ENCODE measurements at regions of chr17 and their contacts with region 1.

Region 1: DNA sequence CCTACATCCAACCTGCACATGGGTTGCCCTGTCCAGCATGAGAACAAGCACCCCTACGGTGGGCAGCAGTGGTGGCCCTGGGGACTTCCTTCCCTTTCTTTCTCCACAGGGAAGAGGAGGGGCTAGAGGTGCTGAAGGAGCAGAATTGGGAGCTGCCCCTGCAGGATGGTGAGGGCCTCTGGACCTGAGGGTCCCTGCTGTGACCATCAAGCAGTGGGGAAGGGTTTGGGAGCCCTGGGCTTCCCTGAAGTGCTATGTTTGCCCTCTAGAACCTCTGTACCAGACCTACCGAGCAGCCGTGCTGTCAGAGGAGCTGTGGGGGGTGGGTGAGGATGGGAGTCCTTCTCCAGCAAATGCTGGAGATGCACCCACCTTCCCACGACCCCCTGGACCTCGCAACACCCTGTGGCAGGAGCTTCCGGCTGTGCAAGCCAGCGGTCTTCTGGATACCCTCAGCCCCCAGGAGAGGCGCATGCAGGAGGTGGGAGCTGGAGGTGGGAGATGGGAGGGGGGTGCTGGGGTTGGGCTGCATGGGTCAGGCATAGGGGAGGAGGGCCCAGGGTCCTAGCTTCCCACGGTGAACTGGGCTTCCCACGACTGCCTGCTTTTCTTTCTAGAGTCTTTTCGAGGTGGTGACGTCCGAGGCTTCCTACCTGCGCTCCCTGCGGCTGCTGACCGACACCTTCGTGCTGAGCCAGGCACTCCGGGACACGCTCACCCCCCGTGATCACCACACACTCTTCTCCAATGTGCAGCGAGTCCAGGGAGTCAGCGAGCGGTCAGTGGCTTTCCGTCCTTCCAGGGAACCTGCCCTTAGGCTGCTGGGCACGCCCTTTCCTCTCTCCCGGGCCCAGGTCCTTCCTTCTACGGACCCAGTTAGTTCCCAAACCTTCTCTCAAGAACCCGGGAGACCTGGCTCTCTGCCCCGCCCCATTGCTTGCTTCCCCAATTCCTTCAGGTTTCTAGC is 5.0 kb downstream of the ARHGEF15 start:
- DNase-seq: no peak
- ATAC-seq: peak in 1 of 2 donors; percentile 13

Region 2: GRCh38 chr17:8204761-8205555 is 110.1 kb before region 1 on chr17:
- intact Hi-C with region 1: no loop called
- DNase-seq: no peak
- ATAC-seq: no peak

Region 3: DNA sequence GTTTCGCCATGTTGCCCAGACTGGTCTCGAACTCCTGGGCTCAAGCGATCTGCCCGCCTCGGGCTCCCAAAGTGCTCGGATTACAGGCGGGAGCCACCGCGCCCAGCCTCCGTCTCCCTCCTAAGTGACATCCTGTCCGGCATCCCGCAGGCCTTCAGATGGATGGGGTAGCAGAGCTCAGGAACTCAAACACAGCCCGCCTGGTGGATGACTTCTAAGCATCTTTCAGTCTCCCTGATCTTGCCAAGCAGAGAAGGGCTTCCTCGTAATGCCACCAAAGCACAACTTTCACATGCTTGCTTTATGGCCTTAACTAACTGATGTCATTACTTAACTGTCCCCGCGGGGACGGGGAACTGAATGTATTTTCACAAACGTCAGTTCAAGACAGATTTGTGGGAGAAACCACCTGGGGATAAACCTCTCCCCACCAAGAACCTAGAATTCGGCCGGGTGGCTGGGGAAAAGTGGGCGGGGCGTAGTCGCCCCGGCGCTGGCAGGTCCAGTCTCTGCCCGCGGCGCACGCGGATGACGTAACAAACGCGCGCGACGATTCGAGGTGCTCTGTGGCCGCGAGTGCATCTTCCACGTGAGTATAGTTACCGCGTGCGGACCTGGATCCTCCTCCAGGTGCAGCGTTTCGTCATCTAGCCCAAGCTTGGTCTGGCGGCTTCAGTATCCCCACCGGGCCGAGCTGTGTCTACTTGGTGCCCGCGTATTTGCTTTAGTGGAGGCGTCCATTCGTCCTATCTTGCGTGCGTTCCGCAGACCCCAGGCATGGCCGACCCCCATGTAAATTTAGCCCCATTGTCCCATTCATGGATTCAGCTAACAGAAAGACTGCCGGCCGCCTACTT is 66.1 kb before region 1 on chr17 and contains the start of gene PFAS:
- intact Hi-C with region 1: no loop called
- DNase-seq: peak; percentile 96
- ATAC-seq: peak; percentile 85
- total RNA-seq, gene PFAS: 13.5 to 24.1 TPM

Region 4: GRCh38 chr17:8376271-8377067 is 61.4 kb after region 1 on chr17 and contains the start of gene KRABD2:
- intact Hi-C with region 1: loop called in 1 of 2 experiments (anchors 5 kb)
- DNase-seq: peak; percentile 93
- ATAC-seq: peak; percentile 98

Measured in left cardiac atrium (tissue), 4 donors.